ENCODE measurements at regions of chr2 and their contacts with region 1.

Region 1: DNA sequence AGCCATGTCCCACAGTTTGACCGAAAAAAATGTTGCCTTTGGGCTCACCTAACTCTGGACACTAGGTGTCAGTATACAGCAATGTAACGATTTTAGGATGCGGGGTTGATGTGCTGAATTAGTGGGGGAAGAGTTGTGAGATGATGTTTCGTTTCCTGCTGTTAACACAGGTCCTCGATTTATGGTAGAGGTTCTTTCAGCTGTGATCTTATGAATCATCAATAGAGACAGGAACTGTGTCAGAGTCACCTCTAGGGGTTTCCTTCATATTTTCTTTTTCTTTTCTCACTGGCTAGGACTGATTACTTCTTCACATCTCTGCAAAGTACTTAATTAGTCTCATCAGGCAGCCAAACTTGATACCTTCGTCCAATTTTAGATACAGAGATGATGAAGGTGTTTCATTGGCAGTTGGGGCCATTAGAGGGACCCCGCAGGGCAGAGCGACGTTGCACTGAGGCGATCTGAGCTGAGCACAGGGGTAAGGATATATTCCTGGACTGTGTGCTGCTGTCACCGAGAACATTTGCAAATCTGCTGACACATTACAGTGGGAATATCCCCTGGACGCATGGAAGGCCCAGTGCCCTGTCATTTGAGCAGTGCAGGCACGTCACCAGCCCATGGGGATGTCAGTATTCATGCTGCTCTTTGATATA is 10.2 kb upstream of the MMADHC start:
- DNase-seq: peak; percentile 52
- CTCF ChIP-seq: peak; percentile 81

Region 2: DNA sequence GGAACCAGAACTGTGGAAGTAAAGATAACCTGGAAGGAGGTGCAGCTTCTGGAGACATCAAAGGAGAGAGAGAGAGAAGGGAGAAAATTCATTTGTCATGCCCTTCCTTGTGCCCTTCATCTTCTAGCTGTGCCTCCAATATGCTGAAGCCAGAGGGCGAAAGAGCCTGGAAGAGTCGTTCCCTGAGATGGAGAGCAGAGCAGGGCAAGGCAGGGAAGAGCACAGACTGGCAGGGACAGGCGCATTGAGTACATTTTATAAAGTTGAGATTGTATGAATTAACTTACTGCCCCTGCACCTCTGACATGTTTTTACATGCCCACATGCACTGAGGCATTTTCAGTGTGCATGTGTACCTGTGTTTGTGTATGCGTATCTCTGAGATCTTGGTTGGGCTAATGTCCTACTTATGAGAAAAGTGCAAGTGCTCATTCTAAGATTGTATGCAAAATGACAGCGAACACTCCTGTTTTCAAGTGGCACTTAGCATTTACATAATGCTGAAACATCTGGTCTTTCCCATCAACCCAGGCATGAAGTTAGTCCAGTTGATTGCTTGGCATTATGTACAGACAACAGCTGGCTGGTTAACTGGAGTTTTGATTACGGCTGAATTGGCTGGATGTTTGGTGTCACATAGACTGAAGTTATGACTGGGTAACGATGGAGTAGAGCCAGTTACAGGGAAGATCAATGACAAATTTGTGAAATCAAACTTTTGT is 13.5 kb after region 1 on chr2:
- CTCF ChIA-PET with region 1: interaction called, 17 read pairs
- POLR2A ChIA-PET with region 1: no interaction called
- DNase-seq: no peak
- CTCF ChIP-seq: no peak

Region 3: DNA sequence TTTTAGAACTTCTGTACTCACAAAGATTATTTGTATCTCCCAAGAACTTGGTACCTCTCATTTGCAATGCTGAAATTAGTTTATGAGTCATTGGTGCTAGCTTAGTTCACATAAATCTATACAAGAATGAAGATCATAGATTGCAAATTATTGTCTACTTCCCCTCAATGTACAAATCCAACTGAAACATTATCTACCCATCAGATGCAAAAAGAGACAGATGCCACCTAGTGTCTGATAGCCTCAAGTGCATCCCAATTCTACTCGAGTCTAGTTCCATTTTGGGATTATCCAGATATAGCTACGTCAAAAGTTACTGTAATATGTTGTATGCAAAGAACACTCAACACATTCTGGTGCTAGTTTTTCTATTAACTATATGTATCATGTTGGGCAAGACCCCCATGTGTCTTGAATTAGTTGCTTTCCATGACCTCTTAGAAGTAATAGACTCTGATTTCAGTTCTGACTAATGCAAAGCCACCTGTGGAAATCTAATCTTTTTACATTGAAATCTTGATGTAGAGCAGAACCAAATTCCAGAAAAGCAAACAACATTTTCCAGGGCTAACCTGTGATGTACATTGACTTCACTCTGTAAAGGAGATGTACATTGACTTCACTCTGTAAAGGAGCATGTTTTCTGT is 1453.9 kb after region 1 on chr2:
- CTCF ChIA-PET with region 1: interaction called, 24 read pairs
- POLR2A ChIA-PET with region 1: no interaction called
- DNase-seq: peak; percentile 29
- CTCF ChIP-seq: peak; percentile 64

Region 4: GRCh38 chr2:151238527-151239487 is 1641.0 kb after region 1 on chr2:
- CTCF ChIA-PET with region 1: interaction called, 47 read pairs
- POLR2A ChIA-PET with region 1: no interaction called
- DNase-seq: peak; percentile 59
- CTCF ChIP-seq: peak; percentile 71

Measured in GM10248 (cell line).